A549 (cell line): ENCODE measurements at regions of chr4 and their contacts with region 1.

Region 1: GRCh38 chr4:7081891-7082471 is 14.1 kb upstream of the GRPEL1 start:
- DNase-seq: peak; percentile 66
- ATAC-seq: peak; percentile 76 to 91
- H3K4me3 ChIP-seq: no peak overlapping the region
- H3K27ac ChIP-seq: no peak overlapping the region
- H3K4me1 ChIP-seq: no peaks in the 10 kb centered on the region
- CTCF ChIP-seq: peak; percentile 55
- EP300 ChIP-seq: no peak
- POLR2A ChIP-seq: no peak
- RAD21 ChIP-seq: peak; percentile 70 to 79

Region 2: DNA sequence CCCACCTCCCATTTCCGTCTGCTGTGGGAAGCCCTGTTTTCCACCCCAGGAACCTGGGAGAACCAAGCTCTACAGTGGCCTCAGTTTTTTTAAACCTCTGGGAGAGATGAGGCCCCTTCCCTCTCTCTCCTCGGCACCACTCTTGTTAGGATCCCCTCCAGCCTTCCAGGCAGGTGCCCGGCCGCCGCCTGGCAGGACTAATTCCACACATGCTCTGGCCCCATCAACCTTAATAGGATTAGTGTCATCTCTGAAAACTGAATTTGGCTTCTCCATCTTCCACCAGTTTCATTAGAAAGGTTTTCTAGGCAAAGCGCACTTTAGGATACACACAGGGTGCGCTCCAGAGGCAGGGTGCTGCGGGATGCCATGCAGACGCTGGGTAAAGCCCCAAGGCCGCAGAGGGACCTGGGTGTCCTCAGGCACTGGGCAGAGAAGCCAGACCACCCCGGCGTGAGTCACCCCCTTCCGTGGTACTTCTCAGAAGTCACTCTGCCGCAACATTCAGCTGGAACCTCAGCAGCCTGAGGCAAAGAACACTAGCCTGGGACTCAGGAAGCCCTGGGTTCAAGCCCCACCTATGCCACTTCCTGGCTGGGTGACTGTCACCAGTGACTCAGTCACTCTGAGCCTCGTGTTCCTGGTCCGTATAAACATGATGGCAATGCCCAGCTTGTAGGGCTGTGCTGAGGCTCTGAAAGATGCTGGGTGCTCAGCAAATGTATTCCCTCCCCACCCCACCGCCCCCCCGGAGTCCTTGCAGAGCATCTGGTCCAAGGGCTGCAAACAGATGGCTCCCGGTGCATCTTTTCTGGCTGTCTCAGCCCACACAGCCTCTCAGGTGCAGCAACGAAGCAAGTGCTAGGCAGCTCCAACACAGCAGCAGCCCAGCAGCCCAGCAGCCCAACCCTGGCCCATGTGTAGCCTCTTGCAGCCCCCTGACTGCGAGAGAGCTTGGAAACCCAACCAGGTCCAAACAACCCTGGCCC is 638.7 kb before region 1 on chr4:
- CTCF ChIA-PET with region 1: no interaction called
- POLR2A ChIA-PET with region 1: no interaction called
- DNase-seq: no peak
- ATAC-seq: no peak
- H3K4me3 ChIP-seq: no peak overlapping the region
- H3K27ac ChIP-seq: no peak overlapping the region
- H3K4me1 ChIP-seq: no peaks in the 10 kb centered on the region
- CTCF ChIP-seq: no peak
- EP300 ChIP-seq: no peak
- POLR2A ChIP-seq: no peak
- RAD21 ChIP-seq: no peak

Region 3: DNA sequence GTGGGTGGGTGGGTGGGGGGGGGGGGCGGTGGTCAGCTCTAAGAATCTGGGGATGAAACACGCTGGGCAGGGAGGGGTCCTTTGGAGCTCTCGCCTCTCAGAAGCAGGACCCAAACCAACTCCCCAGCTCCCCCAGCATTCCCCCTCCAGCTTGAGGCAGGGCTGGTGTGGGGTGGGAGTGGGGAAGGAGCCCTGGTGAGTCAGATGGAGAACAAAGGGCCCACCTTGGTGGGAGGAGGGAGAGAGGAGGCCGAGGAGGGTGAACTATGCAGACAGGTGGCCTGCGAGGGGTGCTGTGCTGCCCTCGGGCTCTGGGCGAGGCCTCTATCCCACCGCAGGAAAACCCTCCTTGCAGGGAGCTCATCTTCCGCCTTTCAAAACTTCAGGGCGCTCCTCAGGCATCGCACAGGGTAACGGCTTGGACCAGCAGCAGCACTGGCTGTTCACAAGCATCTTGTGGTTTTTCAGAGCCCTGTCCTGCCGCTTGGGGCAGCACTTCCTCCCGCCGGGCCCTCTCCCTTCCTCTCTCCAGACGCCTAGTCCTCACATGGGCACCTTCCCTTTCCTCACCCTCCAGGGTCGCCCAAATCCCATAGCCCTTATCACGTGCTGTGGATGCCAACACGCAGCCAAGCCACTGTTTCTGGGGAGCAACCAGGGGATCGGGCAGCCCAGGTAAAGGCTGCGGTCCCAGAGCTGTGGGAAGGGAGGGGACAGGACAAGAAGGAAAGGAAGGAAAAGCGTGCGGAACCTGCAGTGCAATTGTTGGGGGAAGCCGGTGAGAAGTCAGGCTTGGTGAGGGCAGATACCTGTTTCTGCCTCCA is 19.9 kb after region 1 on chr4:
- CTCF ChIA-PET with region 1: interaction called, 40 read pairs
- POLR2A ChIA-PET with region 1: no interaction called
- DNase-seq: peak; percentile 73 to 77
- ATAC-seq: peak; percentile 89 to 90
- H3K4me3 ChIP-seq: peak overlapping the region; percentile 66; the same call in 2 of the 3 replicates
- H3K27ac ChIP-seq: peak overlapping the region in 1 of 2 experiments; percentile 81; a peak in 3 of 6 replicates
- H3K4me1 ChIP-seq: peaks cover 16% of the 10 kb centered on the region
- CTCF ChIP-seq: peak; percentile 56
- EP300 ChIP-seq: no peak
- POLR2A ChIP-seq: no peak
- RAD21 ChIP-seq: peak; percentile 26 to 37; a peak in 3 of 5 replicates